AG04450 (cell line): ENCODE measurements at regions of chr5 and their contacts with region 1.

Region 1: DNA sequence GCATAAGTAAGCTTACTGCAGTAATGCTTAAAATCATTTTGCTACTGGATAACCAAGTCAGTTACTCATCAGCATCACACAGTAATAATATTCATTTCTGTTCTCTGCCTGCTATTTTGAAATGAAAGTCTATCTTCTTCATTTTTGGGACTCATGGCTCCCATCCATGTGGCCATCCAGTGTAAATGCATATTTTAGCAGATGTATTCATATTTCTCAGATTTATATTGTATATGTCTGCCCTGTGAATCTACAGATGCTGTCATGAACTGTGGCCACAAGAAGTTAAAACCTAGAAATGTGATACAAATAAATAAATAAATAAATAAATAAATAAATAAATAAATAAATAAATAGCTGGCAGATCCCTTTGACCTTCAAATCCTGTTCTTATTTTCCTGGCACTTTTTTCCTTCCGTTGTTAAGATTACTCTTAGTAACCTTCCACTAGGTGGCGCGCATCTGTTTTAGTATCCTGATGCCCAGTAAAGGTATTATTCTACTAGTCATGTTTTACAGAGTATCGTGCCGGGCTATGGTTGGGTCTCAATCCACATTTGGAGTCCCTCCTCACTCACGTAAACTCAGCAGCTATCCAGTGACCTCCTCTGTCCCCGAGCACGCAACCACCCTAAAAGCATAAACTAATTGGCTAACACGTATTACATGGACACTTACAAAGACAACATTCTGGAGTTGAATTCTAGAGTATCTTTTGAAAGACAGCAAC is 79.2 kb upstream of the IL7R start:
- DNase-seq: peak; percentile 48
- H3K4me3 ChIP-seq: no peak overlapping the region
- H3K27ac ChIP-seq: no peak overlapping the region
- H3K27me3 ChIP-seq: no peaks in the 10 kb centered on the region
- CTCF ChIP-seq: peak; percentile 70

Region 2: GRCh38 chr5:35202319-35203111 is 575.0 kb before region 1 on chr5:
- CTCF ChIA-PET with region 1: no interaction called
- POLR2A ChIA-PET with region 1: no interaction called
- DNase-seq: no peak
- H3K4me3 ChIP-seq: no peak overlapping the region
- H3K27ac ChIP-seq: no peak overlapping the region
- H3K27me3 ChIP-seq: peaks cover 13% of the 10 kb centered on the region
- CTCF ChIP-seq: peak; percentile 57

Region 3: GRCh38 chr5:35857606-35858205 is 80.2 kb after region 1 on chr5:
- CTCF ChIA-PET with region 1: interaction called, 14 read pairs
- POLR2A ChIA-PET with region 1: no interaction called
- DNase-seq: peak; percentile 26
- H3K4me3 ChIP-seq: peak overlapping the region; percentile 38
- H3K27ac ChIP-seq: no peak overlapping the region
- H3K27me3 ChIP-seq: no peaks in the 10 kb centered on the region
- CTCF ChIP-seq: no peak